PC-3 (cell line): ENCODE measurements at regions of chr1 and their contacts with region 1.

Region 1: GRCh38 chr1:155017041-155017945 is 14.7 kb downstream of the ZBTB7B start:
- DNase-seq: peak; percentile 99
- ATAC-seq: peak; percentile 89
- H3K4me3 ChIP-seq: peak overlapping the region; percentile 42
- H3K27ac ChIP-seq: peak overlapping the region; percentile 87
- H3K4me1 ChIP-seq: peaks cover 21% of the 10 kb centered on the region
- H3K27me3 ChIP-seq: no peaks in the 10 kb centered on the region
- CTCF ChIP-seq: peak; percentile 100

Region 2: DNA sequence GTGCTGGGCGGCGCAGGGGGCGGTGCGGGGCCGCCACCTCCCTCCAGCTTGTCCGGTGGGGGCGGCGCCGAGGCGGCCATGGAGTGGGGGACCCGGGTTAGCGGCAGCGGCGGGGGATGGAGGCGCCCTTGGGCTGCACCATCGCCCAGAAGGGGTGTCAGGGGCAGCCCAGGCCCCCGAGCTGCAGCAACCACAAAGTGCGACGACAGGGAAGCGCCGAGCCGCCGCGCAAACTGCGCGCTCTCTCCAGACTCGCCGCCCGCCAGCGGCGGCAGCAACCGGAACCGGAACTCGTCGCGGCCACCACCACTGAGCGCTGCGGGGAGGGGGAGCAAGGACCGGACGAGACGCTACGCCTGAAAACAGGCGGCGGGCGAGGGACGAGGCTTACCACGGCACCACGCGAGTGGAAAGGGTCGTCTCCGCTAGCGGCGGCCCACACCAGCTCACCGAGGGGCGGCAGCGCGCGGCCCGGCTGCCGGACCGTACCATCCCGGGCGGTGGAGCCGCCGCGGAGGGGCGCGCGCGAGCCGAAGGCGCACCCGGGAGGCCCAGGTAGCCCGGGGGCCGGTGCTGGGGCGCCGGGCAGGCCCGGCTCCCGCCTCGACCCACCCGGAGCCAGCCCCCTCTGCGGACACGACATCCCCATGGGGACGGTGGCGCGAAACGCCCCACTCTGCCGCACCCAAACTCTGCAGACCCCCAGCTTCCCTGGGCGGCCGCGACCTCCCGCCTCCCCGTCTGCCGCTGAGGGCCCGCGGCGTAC is 55.6 kb before region 1 on chr1 and contains the start of gene PYGO2:
- CTCF ChIA-PET with region 1: interaction called, 4 read pairs
- POLR2A ChIA-PET with region 1: no interaction called
- intact Hi-C with region 1: loop called (anchors 2 kb)
- DNase-seq: peak; percentile 80
- ATAC-seq: peak; percentile 82
- H3K4me3 ChIP-seq: peak within 1 kb of the TSS; percentile 71
- H3K27ac ChIP-seq: peak within 1 kb of the TSS; percentile 83
- H3K4me1 ChIP-seq: peaks cover 19% of the 10 kb centered on the region
- H3K27me3 ChIP-seq: no peaks in the 10 kb centered on the region
- CTCF ChIP-seq: peak; percentile 78
- total RNA-seq, gene PYGO2: 41.7 and 43.3 TPM in 2 replicates

Region 3: GRCh38 chr1:155044812-155045690 is 27.8 kb after region 1 on chr1:
- CTCF ChIA-PET with region 1: interaction called, 13 read pairs
- POLR2A ChIA-PET with region 1: no interaction called
- intact Hi-C with region 1: loop called (anchors 5 kb)
- DNase-seq: peak; percentile 87
- ATAC-seq: peak; percentile 98
- H3K4me3 ChIP-seq: no peak overlapping the region
- H3K27ac ChIP-seq: no peak overlapping the region
- H3K4me1 ChIP-seq: peaks cover 25% of the 10 kb centered on the region
- H3K27me3 ChIP-seq: no peaks in the 10 kb centered on the region
- CTCF ChIP-seq: peak; percentile 94